ENCODE measurements at regions of chr6 and their contacts with region 1.

Region 1: DNA sequence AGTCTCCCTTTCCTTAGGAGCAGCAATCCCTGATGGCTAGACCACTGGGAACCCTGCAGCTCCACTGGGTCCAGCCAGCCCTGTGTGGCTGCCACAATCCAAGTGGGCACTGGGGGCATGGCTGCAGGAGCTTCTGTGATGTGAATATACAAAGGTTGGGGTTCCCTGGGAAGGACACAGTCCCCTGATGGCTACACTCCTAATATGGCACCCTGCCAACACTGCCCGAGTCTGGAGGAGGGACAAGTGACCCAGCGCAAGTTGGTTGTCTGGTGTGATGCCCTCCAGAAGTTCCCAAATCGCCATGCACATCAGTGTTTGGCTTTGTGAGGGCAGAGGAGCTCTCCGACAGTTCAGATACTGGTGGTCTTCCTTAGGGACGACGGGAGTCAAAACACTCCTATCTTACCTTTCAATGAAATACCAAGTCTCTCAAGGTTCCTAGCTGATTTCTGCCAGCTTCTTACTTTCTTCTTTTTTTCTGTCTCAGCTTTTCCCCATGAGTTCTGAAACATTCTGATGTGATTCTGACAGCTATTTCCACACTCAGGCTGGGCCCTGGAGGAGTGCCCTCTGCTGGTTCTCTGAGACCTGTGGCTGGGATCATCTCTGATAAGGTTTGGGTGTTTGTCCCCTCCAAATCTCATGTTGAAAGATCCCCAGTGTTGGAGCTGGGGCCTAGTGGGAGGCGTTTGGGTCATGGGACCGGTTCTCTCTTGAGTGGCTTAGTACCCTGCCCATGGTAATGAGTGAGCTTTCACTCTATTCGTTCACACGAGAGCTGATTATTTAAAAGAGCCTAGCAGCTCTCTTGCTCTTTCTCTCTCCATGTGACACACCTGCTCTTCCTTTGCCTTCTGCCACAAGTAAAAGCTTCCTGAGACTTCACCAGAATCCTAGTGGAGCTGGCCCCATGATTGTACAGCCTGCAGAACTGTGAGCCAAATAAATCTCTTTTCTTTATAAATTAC is 15.5 kb upstream of the ZFP57 start:
- DNase-seq: no peak
- H3K4me3 ChIP-seq: no peak overlapping the region
- H3K27ac ChIP-seq: no peak overlapping the region
- H3K4me1 ChIP-seq: no peaks in the 10 kb centered on the region
- H3K27me3 ChIP-seq: peaks cover 0 to 2% of the 10 kb centered on the region in 2 experiments
- CTCF ChIP-seq: peak; percentile 40 to 55
- POLR2A ChIP-seq: no peak

Region 2: GRCh38 chr6:29665942-29666825 is 30.3 kb before region 1 on chr6:
- CTCF ChIA-PET with region 1: interaction called, 11 read pairs
- POLR2A ChIA-PET with region 1: interaction called, 3 read pairs
- dilution Hi-C with region 1: no loop called
- intact Hi-C with region 1: no loop called
- DNase-seq: no peak
- H3K4me3 ChIP-seq: no peak overlapping the region
- H3K27ac ChIP-seq: no peak overlapping the region
- H3K4me1 ChIP-seq: no peaks in the 10 kb centered on the region
- H3K27me3 ChIP-seq: peaks cover 14 to 27% of the 10 kb centered on the region in 2 experiments
- CTCF ChIP-seq: no peak
- POLR2A ChIP-seq: no peak

Region 3: GRCh38 chr6:29763491-29764289 is 67.2 kb after region 1 on chr6:
- CTCF ChIA-PET with region 1: no interaction called
- POLR2A ChIA-PET with region 1: no interaction called
- dilution Hi-C with region 1: no loop called
- intact Hi-C with region 1: no loop called
- DNase-seq: peak; percentile 95
- H3K4me3 ChIP-seq: no peak overlapping the region
- H3K27ac ChIP-seq: peak overlapping the region; percentile 93
- H3K4me1 ChIP-seq: peaks cover 29% of the 10 kb centered on the region
- H3K27me3 ChIP-seq: peaks cover 0 to 4% of the 10 kb centered on the region in 2 experiments
- CTCF ChIP-seq: no peak
- POLR2A ChIP-seq: no peak

Region 4: GRCh38 chr6:30037182-30037788 is 340.8 kb after region 1 on chr6:
- CTCF ChIA-PET with region 1: no interaction called
- POLR2A ChIA-PET with region 1: no interaction called
- dilution Hi-C with region 1: no loop called
- intact Hi-C with region 1: no loop called
- DNase-seq: peak; percentile 13
- H3K4me3 ChIP-seq: no peak overlapping the region
- H3K27ac ChIP-seq: no peak overlapping the region
- H3K4me1 ChIP-seq: no peaks in the 10 kb centered on the region
- H3K27me3 ChIP-seq: no peaks in the 10 kb centered on the region
- CTCF ChIP-seq: peak; percentile 48 to 60
- POLR2A ChIP-seq: no peak

Measured in endothelial cell of umbilical vein (primary cell).